Panc1 (cell line): ENCODE measurements at regions of chr9 and their contacts with region 1.

Region 1: DNA sequence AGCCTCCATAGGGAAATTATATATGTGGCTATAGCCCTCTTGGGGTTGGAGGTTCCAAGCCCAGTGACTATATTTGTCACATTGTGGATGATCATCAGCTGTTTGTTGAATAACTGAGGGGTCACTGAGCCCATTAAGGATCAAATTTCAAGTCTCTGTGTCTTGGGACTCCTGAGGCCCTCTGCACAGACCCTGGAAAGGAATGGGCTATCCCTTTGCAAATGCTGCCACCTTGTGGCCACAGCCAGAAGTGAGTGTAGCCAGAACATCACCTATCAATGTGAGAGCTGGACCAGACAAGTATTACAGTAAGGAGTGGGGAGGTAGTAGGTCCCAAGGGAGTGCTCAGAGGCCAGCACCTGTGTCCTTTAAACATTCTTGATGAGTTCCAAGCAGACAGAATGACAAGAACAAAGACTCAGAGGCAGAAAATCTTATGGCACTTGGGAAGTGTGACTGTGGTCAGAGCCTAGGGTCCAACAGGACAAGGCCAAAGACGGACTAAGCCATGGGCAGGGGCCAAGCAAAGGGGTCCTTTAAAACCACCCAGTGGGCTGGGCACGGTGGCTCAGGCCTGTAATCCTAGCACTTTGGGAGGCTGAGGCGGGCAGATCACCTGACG is 8.2 kb downstream of the RPP25L start:
- DNase-seq: peak; percentile 48
- ATAC-seq: peak; percentile 92
- H3K4me3 ChIP-seq: no peak overlapping the region
- H3K27ac ChIP-seq: no peak overlapping the region
- H3K4me1 ChIP-seq: no peaks in the 10 kb centered on the region
- H3K27me3 ChIP-seq: no peaks in the 10 kb centered on the region
- CTCF ChIP-seq: peak; percentile 92

Region 2: GRCh38 chr9:34540828-34541227 is 62.9 kb before region 1 on chr9:
- CTCF ChIA-PET with region 1: interaction called, 10 read pairs
- POLR2A ChIA-PET with region 1: no interaction called
- in situ Hi-C with region 1: no loop called
- intact Hi-C with region 1: no loop called
- DNase-seq: no peak
- ATAC-seq: no peak
- H3K4me3 ChIP-seq: no peak overlapping the region
- H3K27ac ChIP-seq: no peak overlapping the region
- H3K4me1 ChIP-seq: no peaks in the 10 kb centered on the region
- H3K27me3 ChIP-seq: peaks cover 2% of the 10 kb centered on the region; the same call in 1 of the 2 replicates
- CTCF ChIP-seq: no peak

Region 3: DNA sequence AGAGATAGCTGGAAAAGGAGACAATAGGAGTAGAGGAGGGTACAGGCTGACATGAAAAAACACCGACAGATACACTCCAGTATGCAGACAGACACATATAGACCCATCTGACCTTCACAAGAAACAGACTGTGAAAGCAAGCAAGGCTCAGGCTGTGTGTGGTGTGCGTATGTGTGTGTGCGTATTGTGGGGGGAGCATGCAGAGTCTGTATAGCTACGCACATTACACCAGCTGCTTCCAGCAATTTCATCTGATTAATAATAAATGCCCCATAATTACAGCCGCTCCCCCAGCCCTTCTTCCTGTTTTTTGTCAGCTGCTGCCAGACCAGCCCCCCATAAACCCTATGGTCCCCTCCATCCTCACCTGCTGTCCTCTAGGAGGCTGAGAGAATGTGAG is 20.9 kb before region 1 on chr9:
- CTCF ChIA-PET with region 1: interaction called, 12 read pairs
- POLR2A ChIA-PET with region 1: interaction called, 3 read pairs
- in situ Hi-C with region 1: no loop called
- intact Hi-C with region 1: no loop called
- DNase-seq: no peak
- ATAC-seq: no peak
- H3K4me3 ChIP-seq: no peak overlapping the region
- H3K27ac ChIP-seq: no peak overlapping the region
- H3K4me1 ChIP-seq: no peaks in the 10 kb centered on the region
- H3K27me3 ChIP-seq: no peaks in the 10 kb centered on the region; the same call in 1 of the 2 replicates
- CTCF ChIP-seq: no peak

Region 4: GRCh38 chr9:34591248-34591916 is 12.3 kb before region 1 on chr9:
- CTCF ChIA-PET with region 1: interaction called, 12 read pairs
- POLR2A ChIA-PET with region 1: no interaction called
- in situ Hi-C with region 1: no loop called
- intact Hi-C with region 1: no loop called
- DNase-seq: peak; percentile 33
- ATAC-seq: peak; percentile 91
- H3K4me3 ChIP-seq: peak overlapping the region in 1 of 2 experiments; percentile 17; a peak in 1 of 4 replicates
- H3K27ac ChIP-seq: no peak overlapping the region
- H3K4me1 ChIP-seq: peaks cover 10% of the 10 kb centered on the region
- H3K27me3 ChIP-seq: peaks cover 6% of the 10 kb centered on the region
- CTCF ChIP-seq: no peak

Region 5: GRCh38 chr9:34637356-34638137 is 33.8 kb after region 1 on chr9 and contains the start of gene SIGMAR1:
- CTCF ChIA-PET with region 1: interaction called, 6 read pairs
- POLR2A ChIA-PET with region 1: interaction called, 11 read pairs
- in situ Hi-C with region 1: no loop called
- intact Hi-C with region 1: no loop called
- DNase-seq: peak; percentile 51
- ATAC-seq: peak; percentile 94
- H3K4me3 ChIP-seq: peak within 1 kb of the TSS; percentile 70 to 94
- H3K27ac ChIP-seq: peak within 1 kb of the TSS; percentile 98
- H3K4me1 ChIP-seq: peaks cover 13% of the 10 kb centered on the region
- H3K27me3 ChIP-seq: no peaks in the 10 kb centered on the region
- CTCF ChIP-seq: no peak
- total RNA-seq, gene SIGMAR1: 131 TPM

Region 6: DNA sequence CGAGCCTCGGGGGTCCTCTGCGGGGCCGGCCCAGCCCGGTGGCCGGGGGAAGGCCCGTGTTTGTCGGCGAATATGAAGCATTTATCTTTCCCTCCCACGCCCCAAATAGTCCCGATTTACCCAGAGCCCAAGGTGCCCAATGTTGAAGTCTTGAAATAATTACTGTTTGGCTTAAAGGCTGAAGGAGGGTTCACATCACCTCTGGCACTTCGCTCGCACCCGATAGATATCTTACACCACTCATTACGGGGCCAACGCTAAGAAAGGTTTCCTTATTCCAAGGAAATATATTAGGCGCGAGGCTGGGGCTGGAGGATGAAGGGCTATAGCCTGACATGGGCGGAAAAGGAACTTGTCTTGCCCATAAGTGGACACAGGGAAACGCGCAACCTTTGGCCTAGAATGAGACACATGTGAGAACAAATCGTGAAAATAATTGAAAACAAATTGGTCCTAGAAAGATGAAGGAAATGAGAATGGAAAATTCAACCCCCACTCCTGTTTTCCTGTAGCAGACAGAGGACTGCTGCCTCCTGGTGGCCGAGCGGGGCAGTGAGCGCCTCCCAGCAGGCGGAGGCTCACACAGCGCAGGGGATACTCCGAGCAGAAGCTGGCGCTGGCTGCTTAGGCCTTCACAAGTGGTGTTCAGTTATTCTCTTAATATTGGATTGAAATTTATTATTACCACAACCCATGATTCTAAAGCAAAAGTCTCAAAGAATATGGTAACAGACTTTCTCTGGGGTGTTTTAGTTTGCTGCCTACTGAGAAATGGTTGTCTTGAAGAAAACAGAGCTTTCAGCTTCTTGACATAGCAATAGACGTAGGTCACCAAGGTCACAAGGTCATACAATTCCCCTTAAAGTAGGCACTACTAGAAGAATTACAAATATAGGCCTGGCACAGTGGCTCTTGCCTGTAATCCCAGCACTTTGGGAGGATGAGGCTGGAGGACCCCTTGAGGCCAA is 98.3 kb after region 1 on chr9:
- CTCF ChIA-PET with region 1: no interaction called
- POLR2A ChIA-PET with region 1: no interaction called
- in situ Hi-C with region 1: no loop called
- intact Hi-C with region 1: no loop called
- DNase-seq: peak; percentile 62
- ATAC-seq: peak; percentile 93
- H3K4me3 ChIP-seq: peak overlapping the region; percentile 54 to 79
- H3K27ac ChIP-seq: peak overlapping the region; percentile 49; the same call in 1 of the 2 replicates
- H3K4me1 ChIP-seq: no peaks in the 10 kb centered on the region; the same call in 1 of the 2 replicates
- H3K27me3 ChIP-seq: no peaks in the 10 kb centered on the region; the same call in 1 of the 2 replicates
- CTCF ChIP-seq: peak; percentile 99